ENCODE measurements at regions of chr1 and their contacts with region 1.

Region 1: DNA sequence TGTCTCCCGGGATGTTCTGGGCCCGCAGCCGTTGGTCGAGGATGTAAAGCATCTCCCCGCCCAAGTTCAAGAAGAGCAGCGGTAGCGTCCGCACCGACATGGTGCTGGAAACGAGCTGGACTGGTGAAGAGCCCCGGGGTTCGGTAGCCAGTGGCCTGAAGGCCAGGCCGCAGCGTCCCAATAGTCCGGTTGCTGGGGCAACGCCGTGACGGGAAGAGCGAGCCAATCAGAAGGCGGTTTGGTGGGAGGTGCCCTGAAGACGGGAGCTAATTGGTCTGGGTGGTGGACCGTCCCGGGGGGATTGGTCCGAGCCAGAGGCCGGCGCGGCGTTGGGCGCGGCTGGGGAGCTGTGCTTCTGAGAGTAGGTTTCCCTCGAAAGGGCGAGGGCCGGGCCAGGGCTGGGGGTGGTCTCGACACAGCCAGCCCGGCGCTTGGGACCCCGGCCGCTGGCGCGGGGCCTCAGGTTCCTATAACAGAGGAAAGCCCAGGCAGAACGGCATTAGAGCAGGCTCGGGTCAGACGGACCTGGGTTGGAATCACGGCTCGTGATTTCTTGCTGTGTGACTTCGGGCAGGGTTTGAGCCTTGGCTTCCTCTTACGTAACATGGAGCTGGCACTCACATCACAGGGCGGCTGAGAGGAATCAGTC is at the start of gene OSCP1:
- DNase-seq: peak; percentile 97
- H3K4me3 Mint-ChIP-seq: peak within 1 kb of the TSS; percentile 89
- H3K27ac Mint-ChIP-seq: peak within 1 kb of the TSS; percentile 89
- H3K4me1 Mint-ChIP-seq: peaks cover 20% of the 10 kb centered on the region
- H3K27me3 Mint-ChIP-seq: no peaks in the 10 kb centered on the region
- total RNA-seq, gene OSCP1: 0.82 and 0.92 TPM in 2 replicates

Region 2: GRCh38 chr1:36328713-36329112 is 121.7 kb before region 1 on chr1:
- intact Hi-C with region 1: no loop called
- DNase-seq: no peak
- H3K4me3 Mint-ChIP-seq: no peak overlapping the region
- H3K27ac Mint-ChIP-seq: no peak overlapping the region
- H3K4me1 Mint-ChIP-seq: peaks cover 19% of the 10 kb centered on the region
- H3K27me3 Mint-ChIP-seq: peaks cover 21% of the 10 kb centered on the region

Region 3: GRCh38 chr1:36463803-36464604 is 13.6 kb after region 1 on chr1 and contains the start of gene MRPS15:
- intact Hi-C with region 1: loop called (anchors 2 kb)
- DNase-seq: peak; percentile 99
- H3K4me3 Mint-ChIP-seq: peak within 1 kb of the TSS; percentile 99
- H3K27ac Mint-ChIP-seq: peak within 1 kb of the TSS; percentile 98
- H3K4me1 Mint-ChIP-seq: peaks cover 39% of the 10 kb centered on the region
- H3K27me3 Mint-ChIP-seq: no peaks in the 10 kb centered on the region
- total RNA-seq, gene MRPS15: 117 and 126 TPM in 2 replicates